Activated CD4-positive, alpha-beta T cell treated with anti-CD3 and anti-CD28 coated beads for 36 hours (primary cell): ENCODE measurements at regions of chr1 and their contacts with region 1.

Region 1: DNA sequence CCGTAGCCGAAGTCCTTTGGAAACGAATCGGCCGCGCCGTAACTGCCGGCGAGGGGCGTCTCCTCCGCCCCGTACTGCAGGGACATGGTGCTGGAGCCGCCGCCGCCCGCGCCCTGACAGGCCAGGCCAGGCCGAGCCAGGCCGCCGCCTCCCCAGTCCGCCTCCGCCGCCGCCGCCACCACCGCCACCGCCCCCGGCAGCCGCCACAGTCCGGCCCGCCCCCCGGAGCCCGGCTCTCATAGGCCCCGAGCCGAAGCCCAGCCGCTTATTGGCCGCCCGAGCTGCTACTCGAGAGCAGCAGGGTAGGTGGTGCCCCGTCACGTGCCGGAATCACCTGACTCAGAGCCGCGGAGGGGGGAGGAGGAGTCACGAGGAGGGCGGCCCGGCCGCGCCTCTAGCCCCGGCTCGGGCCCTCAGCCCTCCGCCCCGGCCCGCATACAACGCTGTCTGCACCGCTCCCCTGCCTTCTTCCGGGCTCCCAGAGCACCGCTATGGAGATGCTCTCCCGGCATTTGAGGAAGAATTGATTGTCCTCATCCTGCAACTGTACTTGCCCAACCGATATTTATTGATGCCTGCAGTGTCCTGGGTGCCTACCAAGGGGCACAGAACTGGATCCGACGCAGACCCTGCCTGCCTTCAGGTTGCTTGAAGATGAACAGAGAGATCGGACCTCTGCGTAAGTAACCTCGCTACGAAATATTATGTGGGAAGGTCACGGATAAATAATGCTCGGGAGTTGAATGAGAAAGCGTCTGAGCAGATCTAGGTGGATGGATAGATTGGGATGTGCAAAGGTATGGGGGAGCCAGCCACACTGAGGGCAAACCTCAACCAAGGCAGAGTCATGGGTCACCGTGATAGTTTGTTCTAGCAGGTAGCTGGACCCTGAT is at the start of gene RRAGC:
- DNase-seq: peak; percentile 99
- ATAC-seq: peak; percentile 98
- H3K4me3 Mint-ChIP-seq: peak within 1 kb of the TSS; percentile 98
- H3K27ac Mint-ChIP-seq: peak within 1 kb of the TSS; percentile 91
- H3K4me1 Mint-ChIP-seq: peaks cover 58% of the 10 kb centered on the region
- H3K27me3 Mint-ChIP-seq: no peaks in the 10 kb centered on the region
- total RNA-seq, gene RRAGC: 15.8 to 19.0 TPM

Region 2: GRCh38 chr1:38873027-38873969 is 13.5 kb after region 1 on chr1 and contains the start of gene MYCBP:
- CTCF ChIA-PET with region 1: interaction called, 7 read pairs
- POLR2A ChIA-PET with region 1: interaction called, 5 read pairs
- intact Hi-C with region 1: loop called (anchors 1 kb)
- DNase-seq: peak; percentile 97
- ATAC-seq: peak; percentile 99
- H3K4me3 Mint-ChIP-seq: peak within 1 kb of the TSS; percentile 92
- H3K27ac Mint-ChIP-seq: peak within 1 kb of the TSS; percentile 83
- H3K4me1 Mint-ChIP-seq: peaks cover 26% of the 10 kb centered on the region
- H3K27me3 Mint-ChIP-seq: no peaks in the 10 kb centered on the region
- total RNA-seq, gene MYCBP: 44.4 to 46.8 TPM

Region 3: GRCh38 chr1:38932571-38932970 is 72.8 kb after region 1 on chr1:
- CTCF ChIA-PET with region 1: interaction called, 3 read pairs
- POLR2A ChIA-PET with region 1: no interaction called
- intact Hi-C with region 1: loop called in 1 of 2 experiments (anchors 2 kb)
- DNase-seq: peak; percentile 44
- ATAC-seq: peak; percentile 82
- H3K4me3 Mint-ChIP-seq: no peak overlapping the region
- H3K27ac Mint-ChIP-seq: peak overlapping the region; percentile 4
- H3K4me1 Mint-ChIP-seq: peaks cover 11% of the 10 kb centered on the region
- H3K27me3 Mint-ChIP-seq: peaks cover 2% of the 10 kb centered on the region